Ascending aorta (tissue), 2 donors: ENCODE measurements at regions of chr20 and their contacts with region 1.

Region 1: DNA sequence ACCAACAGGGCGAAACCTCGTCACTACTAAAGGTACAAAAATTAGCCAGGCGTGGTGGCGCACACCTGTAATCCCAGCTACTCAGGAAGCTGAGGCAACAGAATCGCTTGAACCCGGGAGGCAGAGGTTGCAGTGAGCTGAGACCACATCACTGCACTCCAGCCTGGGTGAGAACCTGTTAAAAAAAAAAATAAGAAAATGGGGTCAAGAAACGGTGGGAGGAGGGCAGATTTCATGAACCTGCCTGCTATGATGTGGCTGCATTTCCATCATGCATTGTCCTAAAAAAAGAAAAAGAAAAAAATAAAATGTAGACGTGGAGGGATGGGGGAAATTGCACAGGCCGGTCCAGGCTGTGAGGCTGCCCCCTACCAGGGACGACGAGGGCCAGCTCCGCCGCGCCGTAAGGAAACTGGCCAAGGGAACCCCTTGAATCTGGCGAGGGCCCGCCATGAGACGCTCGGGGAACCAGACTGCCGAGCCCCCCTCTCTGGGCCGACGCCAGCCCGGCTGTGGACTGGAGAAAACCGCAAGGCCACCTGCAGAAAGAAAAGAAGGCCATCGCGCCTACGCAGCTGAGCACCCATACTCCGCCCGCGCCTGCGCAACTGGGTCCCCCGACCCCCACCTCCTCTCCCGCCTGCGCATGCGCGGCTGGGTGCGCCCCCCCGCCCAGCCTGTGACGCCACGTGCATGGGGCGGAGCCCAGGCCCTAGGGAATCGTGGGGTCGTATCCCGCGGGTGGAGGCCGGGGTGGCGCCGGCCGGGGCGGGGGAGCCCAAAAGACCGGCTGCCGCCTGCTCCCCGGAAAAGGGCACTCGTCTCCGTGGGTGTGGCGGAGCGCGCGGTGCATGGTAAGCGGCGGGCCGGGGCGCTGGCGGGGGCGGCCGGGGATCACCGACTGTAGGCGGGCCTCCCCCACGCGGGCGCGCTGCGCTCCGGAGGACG is at the start of gene ENTPD6:
- DNase-seq: peak; percentile 63 to 93
- H3K4me3 ChIP-seq: peak within 1 kb of the TSS; percentile 78 to 87
- H3K27ac ChIP-seq: peak within 1 kb of the TSS; percentile 75
- H3K4me1 ChIP-seq: peaks cover 0 to 19% of the 10 kb centered on the region in 2 donors
- H3K27me3 ChIP-seq: no peaks in the 10 kb centered on the region
- CTCF ChIP-seq: peak in 2 of 3 experiments; percentile 8 to 38
- total RNA-seq, gene ENTPD6: 66.5 TPM

Region 2: DNA sequence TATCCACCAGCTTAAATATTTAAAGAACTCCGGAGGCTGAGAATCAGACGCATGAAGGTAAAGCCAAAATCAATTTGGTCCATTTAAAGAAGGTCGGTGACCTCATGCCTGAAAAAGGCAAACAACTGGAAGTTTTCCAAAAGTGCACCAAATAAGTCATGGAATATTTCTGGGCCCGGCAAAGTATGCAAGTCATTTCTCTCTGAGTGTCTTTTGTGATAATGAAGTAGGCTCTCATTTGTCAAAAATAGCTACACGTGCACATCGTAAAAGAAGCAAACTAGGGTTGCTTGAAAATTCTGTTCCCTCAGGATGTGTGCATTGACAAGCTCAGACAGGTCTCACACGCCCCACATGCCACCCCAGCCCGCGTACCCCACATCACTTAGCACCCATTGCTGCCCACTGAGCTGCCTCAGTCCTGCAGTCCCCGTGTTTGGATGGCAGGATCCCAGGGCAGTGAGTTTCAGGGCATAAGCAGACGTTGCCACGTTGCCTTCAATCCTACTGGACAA is 32.1 kb after region 1 on chr20:
- intact Hi-C with region 1: loop called (anchors 2 kb)
- DNase-seq: peak in 1 of 2 donors; percentile 80
- H3K4me3 ChIP-seq: no peak overlapping the region
- H3K27ac ChIP-seq: peak overlapping the region; percentile 93 to 97
- H3K4me1 ChIP-seq: peaks cover 16 to 39% of the 10 kb centered on the region in 2 donors
- H3K27me3 ChIP-seq: no peaks in the 10 kb centered on the region
- CTCF ChIP-seq: no peak

Region 3: DNA sequence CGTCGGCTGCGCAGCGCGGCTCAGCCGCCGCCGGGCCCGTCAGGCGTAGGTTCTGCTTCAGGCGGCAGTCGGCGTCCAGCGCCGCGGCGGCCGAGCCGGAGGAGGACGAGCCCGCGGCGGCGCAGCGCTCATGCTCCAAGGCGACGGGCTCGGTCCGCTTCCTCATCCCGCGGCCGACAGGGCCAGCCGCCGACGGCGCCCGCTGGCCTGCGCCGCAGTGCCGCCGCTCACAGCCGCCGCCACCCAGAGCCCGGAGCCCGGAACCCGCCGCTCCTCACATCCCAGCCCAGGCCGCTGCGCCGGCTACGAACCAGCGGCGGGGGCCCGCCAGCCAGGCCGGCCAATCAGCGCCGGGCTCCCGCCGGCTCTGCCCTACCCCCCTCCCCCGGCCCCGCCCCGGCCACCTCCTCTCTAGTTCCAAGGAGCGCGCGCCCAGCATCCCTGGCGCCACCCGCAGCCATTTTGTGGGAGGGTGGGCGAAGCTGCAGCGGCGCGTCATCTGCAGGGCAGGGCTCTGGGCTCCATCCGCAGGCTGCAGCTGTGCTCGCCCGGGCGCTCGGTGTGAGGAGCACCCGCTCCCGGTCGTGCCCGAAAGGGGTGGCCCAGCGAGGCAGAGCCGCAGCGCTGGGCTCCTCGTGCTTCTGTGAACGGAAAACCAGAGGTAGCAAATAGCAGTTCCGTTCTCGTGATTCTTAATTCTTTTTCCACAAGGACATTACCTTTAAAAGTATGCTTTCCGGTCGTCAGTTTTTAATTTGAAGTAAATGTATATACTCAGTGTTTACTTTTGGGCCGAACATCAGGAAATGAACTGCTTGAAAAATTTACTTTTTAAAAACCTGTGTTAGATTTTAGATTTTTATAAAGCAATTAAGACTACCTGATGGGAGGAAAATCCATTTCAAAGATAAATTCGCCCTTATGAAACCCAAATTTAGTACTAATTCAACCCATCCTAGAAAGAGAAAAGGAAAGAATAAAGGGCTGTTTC is 195.5 kb after region 1 on chr20 and contains the start of gene ABHD12:
- intact Hi-C with region 1: loop called (anchors 2 kb)
- DNase-seq: peak; percentile 91 to 99
- H3K4me3 ChIP-seq: peak within 1 kb of the TSS; percentile 83 to 99
- H3K27ac ChIP-seq: peak within 1 kb of the TSS; percentile 70 to 91
- H3K4me1 ChIP-seq: peaks cover 0 to 3% of the 10 kb centered on the region in 2 donors
- H3K27me3 ChIP-seq: no peaks in the 10 kb centered on the region
- CTCF ChIP-seq: no peak
- total RNA-seq, gene ABHD12: 24.3 TPM